MCF 10A (cell line): ENCODE measurements at regions of chr1 and their contacts with region 1.

Region 1: DNA sequence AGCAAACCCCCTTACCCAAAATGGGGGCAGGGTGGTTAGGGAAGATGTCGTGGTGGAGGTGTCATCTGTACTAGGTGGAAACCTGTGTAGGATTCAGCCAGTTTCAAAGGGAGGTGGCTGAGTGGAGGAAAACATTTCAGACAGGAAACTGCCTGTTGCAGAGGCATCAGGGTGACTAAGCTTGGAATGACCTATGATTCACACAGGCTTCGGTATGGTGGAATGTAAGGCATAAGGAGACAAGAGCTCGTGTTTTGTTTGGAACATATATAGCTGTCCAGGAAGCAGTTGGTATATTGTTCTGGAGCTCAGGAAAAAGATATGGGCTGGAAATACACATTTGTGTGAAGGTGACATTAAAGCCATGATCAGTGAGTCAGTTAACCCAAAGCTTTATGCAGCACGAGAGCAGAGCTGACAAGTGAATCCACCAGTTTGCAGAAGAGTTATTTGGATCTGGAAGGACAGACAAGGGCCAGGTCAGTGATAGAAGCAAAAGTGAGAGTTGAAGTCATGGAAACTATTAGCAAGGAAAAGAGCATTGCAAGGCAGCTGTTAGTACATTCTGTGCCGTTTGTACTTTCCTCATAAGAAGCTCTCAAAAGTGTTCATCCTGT is 12.2 kb downstream of the UTP25 start:
- DNase-seq: peak; percentile 99
- H3K4me3 Mint-ChIP-seq: peak overlapping the region; percentile 29
- H3K27ac Mint-ChIP-seq: peak overlapping the region; percentile 82
- H3K4me1 Mint-ChIP-seq: peaks cover 30% of the 10 kb centered on the region
- H3K27me3 Mint-ChIP-seq: no peaks in the 10 kb centered on the region
- CTCF ChIP-seq: no peak

Region 2: DNA sequence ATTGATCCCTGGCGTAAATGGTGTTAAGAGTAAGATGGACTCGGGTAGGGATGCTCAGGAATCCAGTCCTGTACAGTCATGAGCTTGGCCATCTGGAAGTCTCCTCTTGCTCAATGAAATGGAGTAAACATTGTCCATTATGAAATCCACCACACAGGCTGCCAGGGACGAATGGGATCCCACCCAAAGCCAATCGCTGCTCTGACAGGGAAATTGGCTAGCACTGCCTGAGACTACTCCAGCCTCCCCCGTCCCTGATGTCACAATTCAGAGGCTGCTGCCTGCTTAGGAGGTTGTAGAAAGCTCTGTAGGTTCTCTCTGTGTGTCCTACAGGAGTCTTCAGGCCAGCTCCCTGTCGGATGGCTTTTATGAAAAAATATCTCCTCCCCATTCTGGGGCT is 135.4 kb before region 1 on chr1 and contains the start of gene HSD11B1:
- CTCF ChIA-PET with region 1: no interaction called
- POLR2A ChIA-PET with region 1: no interaction called
- intact Hi-C with region 1: no loop called
- DNase-seq: peak; percentile 94
- H3K4me3 Mint-ChIP-seq: no peak within 1 kb of the TSS
- H3K27ac Mint-ChIP-seq: no peak within 1 kb of the TSS
- H3K4me1 Mint-ChIP-seq: peaks cover 7% of the 10 kb centered on the region
- H3K27me3 Mint-ChIP-seq: no peaks in the 10 kb centered on the region
- CTCF ChIP-seq: no peak
- total RNA-seq, gene HSD11B1: 0.21 and 0.39 TPM in 2 replicates

Region 3: DNA sequence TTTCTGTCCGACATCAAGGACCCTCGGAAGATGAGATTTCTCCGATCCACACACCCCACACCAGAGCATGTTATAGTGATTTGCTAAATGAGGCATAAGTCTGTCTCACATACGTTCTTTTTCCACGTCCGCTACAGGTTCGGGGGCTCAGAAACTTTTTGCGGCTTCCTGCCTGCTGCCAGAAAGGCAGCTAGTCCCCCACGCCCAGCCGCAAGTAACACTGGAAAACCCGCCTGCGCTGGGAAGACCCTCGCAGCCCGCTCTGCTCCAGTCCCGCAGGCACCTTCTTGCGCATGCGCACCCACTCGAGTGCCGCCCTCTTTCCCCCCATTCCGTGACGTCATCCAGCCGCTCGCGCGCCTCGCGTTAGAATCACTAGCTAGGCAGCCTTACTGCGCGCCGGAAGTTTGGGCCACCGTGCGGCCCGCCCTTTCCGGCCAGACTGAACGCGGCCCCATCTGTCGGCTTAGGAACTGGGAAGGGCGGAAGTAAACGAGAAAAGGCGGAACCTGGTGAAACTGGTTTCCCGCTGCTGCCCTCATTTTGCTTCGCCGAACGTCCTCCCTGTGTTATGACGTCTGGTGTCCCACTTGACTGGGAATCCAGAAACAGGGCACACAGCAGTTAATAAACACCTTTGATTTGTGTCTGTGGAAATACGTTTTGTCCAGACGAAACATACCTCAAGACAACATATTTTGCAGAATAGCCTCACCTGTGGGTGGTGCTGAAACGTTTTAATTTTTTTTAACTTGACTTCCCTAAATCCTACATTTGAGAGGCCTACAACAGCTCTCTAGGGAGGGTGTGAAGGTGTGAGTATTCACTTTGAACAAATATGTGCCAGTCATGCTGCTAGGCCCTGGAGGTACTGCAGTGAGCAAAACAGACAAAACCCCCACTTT is 55.5 kb before region 1 on chr1 and contains the start of gene C1orf74:
- CTCF ChIA-PET with region 1: interaction called, 6 read pairs
- POLR2A ChIA-PET with region 1: interaction called, 38 read pairs
- intact Hi-C with region 1: no loop called
- DNase-seq: peak; percentile 100
- H3K4me3 Mint-ChIP-seq: peak within 1 kb of the TSS; percentile 90
- H3K27ac Mint-ChIP-seq: peak within 1 kb of the TSS; percentile 96
- H3K4me1 Mint-ChIP-seq: peaks cover 22% of the 10 kb centered on the region
- H3K27me3 Mint-ChIP-seq: no peaks in the 10 kb centered on the region
- CTCF ChIP-seq: no peak
- total RNA-seq, gene C1orf74: 6.8 and 7.1 TPM in 2 replicates

Region 4: GRCh38 chr1:209805875-209806760 is 33.9 kb before region 1 on chr1 and contains the start of gene IRF6:
- CTCF ChIA-PET with region 1: interaction called, 1,144 read pairs
- POLR2A ChIA-PET with region 1: interaction called, 205 read pairs
- intact Hi-C with region 1: no loop called
- DNase-seq: peak; percentile 99
- H3K4me3 Mint-ChIP-seq: peak within 1 kb of the TSS; percentile 90
- H3K27ac Mint-ChIP-seq: peak within 1 kb of the TSS; percentile 92
- H3K4me1 Mint-ChIP-seq: peaks cover 74% of the 10 kb centered on the region
- H3K27me3 Mint-ChIP-seq: no peaks in the 10 kb centered on the region
- CTCF ChIP-seq: no peak
- total RNA-seq, gene IRF6: 87.8 and 106 TPM in 2 replicates

Region 5: GRCh38 chr1:209850342-209850979 is 10.5 kb after region 1 on chr1:
- CTCF ChIA-PET with region 1: interaction called, 86 read pairs
- POLR2A ChIA-PET with region 1: interaction called, 19 read pairs
- intact Hi-C with region 1: no loop called
- DNase-seq: peak; percentile 80
- H3K4me3 Mint-ChIP-seq: no peak overlapping the region
- H3K27ac Mint-ChIP-seq: peak overlapping the region; percentile 47
- H3K4me1 Mint-ChIP-seq: peaks cover 26% of the 10 kb centered on the region
- H3K27me3 Mint-ChIP-seq: no peaks in the 10 kb centered on the region
- CTCF ChIP-seq: peak; percentile 92

Region 6: GRCh38 chr1:209875515-209875914 is 35.5 kb after region 1 on chr1:
- CTCF ChIA-PET with region 1: interaction called, 3 read pairs
- POLR2A ChIA-PET with region 1: interaction called, 16 read pairs
- intact Hi-C with region 1: no loop called
- DNase-seq: peak; percentile 83
- H3K4me3 Mint-ChIP-seq: no peak overlapping the region
- H3K27ac Mint-ChIP-seq: peak overlapping the region; percentile 98
- H3K4me1 Mint-ChIP-seq: peaks cover 89% of the 10 kb centered on the region
- H3K27me3 Mint-ChIP-seq: no peaks in the 10 kb centered on the region
- CTCF ChIP-seq: peak; percentile 33

Region 7: GRCh38 chr1:209899948-209900347 is 60.0 kb after region 1 on chr1:
- CTCF ChIA-PET with region 1: no interaction called
- POLR2A ChIA-PET with region 1: interaction called, 14 read pairs
- intact Hi-C with region 1: no loop called
- DNase-seq: peak; percentile 54
- H3K4me3 Mint-ChIP-seq: no peak overlapping the region
- H3K27ac Mint-ChIP-seq: peak overlapping the region; percentile 70
- H3K4me1 Mint-ChIP-seq: peaks cover 45% of the 10 kb centered on the region
- H3K27me3 Mint-ChIP-seq: no peaks in the 10 kb centered on the region
- CTCF ChIP-seq: peak; percentile 36